GM12878 (cell line): ENCODE measurements at regions of chr14 and their contacts with region 1.

Region 1: DNA sequence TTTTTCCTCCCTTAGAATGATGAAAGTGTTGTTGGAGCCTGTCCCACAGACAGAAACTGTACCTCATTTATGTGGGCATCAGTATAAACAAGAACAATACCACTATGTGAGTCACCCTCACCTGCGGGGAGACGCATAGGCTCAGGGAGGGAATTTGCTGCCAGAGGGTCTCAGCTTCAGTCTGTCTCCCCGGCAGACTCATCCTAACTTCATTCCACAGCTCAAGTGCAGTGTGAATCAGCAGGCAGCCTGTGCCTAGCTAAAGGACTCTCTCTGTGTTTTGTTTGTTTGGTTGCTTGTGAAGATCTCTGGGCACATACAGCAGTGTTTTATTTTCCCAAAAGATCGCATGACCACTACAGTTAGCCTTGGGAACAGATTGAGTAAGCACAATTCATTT is 98.9 kb downstream of the PRKCH start:
- DNase-seq: no peak
- ATAC-seq: no peak
- H3K4me3 ChIP-seq: no peak overlapping the region
- H3K27ac ChIP-seq: no peak overlapping the region
- H3K4me1 ChIP-seq: peaks cover 15% of the 10 kb centered on the region; the same call in 1 of the 2 replicates
- H3K27me3 ChIP-seq: no peaks in the 10 kb centered on the region
- CTCF ChIP-seq: no peak
- EP300 ChIP-seq: no peak
- POLR2A ChIP-seq: no peak
- RAD21 ChIP-seq: no peak

Region 2: DNA sequence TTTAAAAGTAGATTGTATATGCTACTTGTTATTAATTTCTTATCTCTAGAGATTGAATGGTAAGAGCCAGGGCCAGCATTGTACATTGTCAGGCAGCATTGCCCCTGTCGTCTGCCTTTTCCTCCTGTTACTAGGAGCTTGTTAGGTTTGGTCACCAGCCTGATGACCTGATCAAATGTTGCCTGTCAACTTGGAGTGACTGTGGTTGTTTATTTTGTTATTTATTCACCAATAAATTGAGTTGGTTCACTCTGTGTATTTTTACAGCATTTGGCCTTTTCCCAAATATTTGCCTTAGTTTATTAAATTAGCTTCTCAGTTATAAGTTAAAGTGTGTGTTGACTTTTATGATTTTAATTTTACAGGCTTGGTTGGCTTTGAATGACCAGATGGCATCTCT is 10.6 kb before region 1 on chr14:
- CTCF ChIA-PET with region 1: interaction called, 3 read pairs
- POLR2A ChIA-PET with region 1: no interaction called
- RAD21 ChIA-PET with region 1: no interaction called
- SMC1A ChIA-PET with region 1: interaction called, 14 read pairs
- in situ Hi-C with region 1: no loop called
- intact Hi-C with region 1: no loop called
- DNase-seq: no peak
- ATAC-seq: no peak
- H3K4me3 ChIP-seq: no peak overlapping the region
- H3K27ac ChIP-seq: no peak overlapping the region
- H3K4me1 ChIP-seq: peaks cover 2% of the 10 kb centered on the region
- H3K27me3 ChIP-seq: no peaks in the 10 kb centered on the region
- CTCF ChIP-seq: no peak
- EP300 ChIP-seq: no peak
- POLR2A ChIP-seq: no peak
- RAD21 ChIP-seq: no peak

Region 3: GRCh38 chr14:61456720-61457119 is 36.4 kb after region 1 on chr14:
- CTCF ChIA-PET with region 1: no interaction called
- POLR2A ChIA-PET with region 1: no interaction called
- RAD21 ChIA-PET with region 1: no interaction called
- SMC1A ChIA-PET with region 1: no interaction called
- in situ Hi-C with region 1: no loop called
- intact Hi-C with region 1: no loop called
- DNase-seq: no peak
- ATAC-seq: peak; percentile 86
- H3K4me3 ChIP-seq: no peak overlapping the region
- H3K27ac ChIP-seq: no peak overlapping the region
- H3K4me1 ChIP-seq: peaks cover 6% of the 10 kb centered on the region
- H3K27me3 ChIP-seq: no peaks in the 10 kb centered on the region
- CTCF ChIP-seq: peak; percentile 77 to 80 (median 80)
- EP300 ChIP-seq: no peak
- POLR2A ChIP-seq: no peak
- RAD21 ChIP-seq: peak; percentile 73